HepG2 (cell line): ENCODE measurements at regions of chr15 and their contacts with region 1.

Region 1: GRCh38 chr15:76696871-76697270 is 208.3 kb downstream of the SCAPER start:
- DNase-seq: no peak
- ATAC-seq: no peak
- H3K4me3 ChIP-seq: no peak overlapping the region
- H3K27ac ChIP-seq: no peak overlapping the region
- H3K4me1 ChIP-seq: no peaks in the 10 kb centered on the region; the same call in 1 of the 2 replicates
- H3K27me3 ChIP-seq: no peaks in the 10 kb centered on the region; a peak in 1 of 5 replicates
- CTCF ChIP-seq: no peak
- EP300 ChIP-seq: no peak
- POLR2A ChIP-seq: no peak
- RAD21 ChIP-seq: no peak

Region 2: GRCh38 chr15:76584868-76585575 is 111.8 kb before region 1 on chr15:
- CTCF ChIA-PET with region 1: no interaction called
- POLR2A ChIA-PET with region 1: no interaction called
- in situ Hi-C with region 1: no loop called
- intact Hi-C with region 1: loop called (anchors 5 kb)
- DNase-seq: no peak
- ATAC-seq: no peak
- H3K4me3 ChIP-seq: no peak overlapping the region
- H3K27ac ChIP-seq: no peak overlapping the region
- H3K4me1 ChIP-seq: peaks cover 9% of the 10 kb centered on the region; the same call in 1 of the 2 replicates
- H3K27me3 ChIP-seq: no peaks in the 10 kb centered on the region
- CTCF ChIP-seq: no peak
- EP300 ChIP-seq: no peak
- POLR2A ChIP-seq: no peak
- RAD21 ChIP-seq: no peak

Region 3: DNA sequence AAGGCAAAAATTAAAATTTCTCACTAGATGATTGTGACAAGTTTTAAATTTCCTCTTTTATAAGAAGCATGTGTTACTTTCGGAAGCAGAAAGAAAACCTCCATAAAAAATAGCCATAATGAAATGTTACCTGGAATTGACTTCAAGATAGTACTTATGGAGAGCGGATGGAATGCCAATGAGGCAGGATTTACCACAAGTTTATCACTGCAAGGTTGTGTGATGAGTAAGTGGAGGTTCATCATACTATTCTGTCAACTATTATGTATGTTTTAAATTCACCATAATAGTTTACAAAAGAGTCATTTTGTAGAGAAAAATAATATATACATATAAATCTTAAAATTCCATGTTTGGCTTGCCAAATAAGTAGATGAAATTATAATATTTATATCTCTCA is 22.0 kb before region 1 on chr15:
- CTCF ChIA-PET with region 1: no interaction called
- POLR2A ChIA-PET with region 1: no interaction called
- in situ Hi-C with region 1: no loop called
- intact Hi-C with region 1: no loop called
- DNase-seq: no peak
- ATAC-seq: no peak
- H3K4me3 ChIP-seq: no peak overlapping the region
- H3K27ac ChIP-seq: no peak overlapping the region
- H3K4me1 ChIP-seq: no peaks in the 10 kb centered on the region
- H3K27me3 ChIP-seq: no peaks in the 10 kb centered on the region; a peak in 1 of 5 replicates
- CTCF ChIP-seq: no peak
- EP300 ChIP-seq: no peak
- POLR2A ChIP-seq: no peak
- RAD21 ChIP-seq: no peak